PC-9 (cell line): ENCODE measurements at regions of chr11 and their contacts with region 1.

Region 1: DNA sequence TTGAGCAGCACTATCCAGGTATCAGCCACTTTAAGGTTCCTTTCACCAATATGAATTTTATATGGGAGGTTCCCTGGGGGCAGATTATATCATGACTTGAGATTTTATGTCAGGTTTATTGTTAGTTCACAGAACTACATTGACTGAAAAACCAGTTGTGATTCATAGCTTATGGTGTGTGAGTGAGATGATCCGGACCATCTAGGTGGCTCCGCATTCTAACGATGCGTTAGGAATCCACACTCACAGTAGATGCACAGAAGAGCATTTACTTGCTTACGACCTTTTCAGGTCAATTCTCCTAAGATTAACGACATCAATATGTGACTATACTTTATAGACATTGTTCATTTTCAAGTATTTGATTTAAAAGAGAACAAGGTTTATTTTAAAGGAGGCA is 984.3 kb upstream of the CCDC90B start:
- DNase-seq: no peak
- H3K4me3 ChIP-seq: no peak overlapping the region
- H3K27ac ChIP-seq: no peak overlapping the region
- H3K4me1 ChIP-seq: no peaks in the 10 kb centered on the region
- H3K27me3 ChIP-seq: peaks cover 6% of the 10 kb centered on the region; the same call in 1 of the 2 replicates
- CTCF ChIP-seq: no peak

Region 2: GRCh38 chr11:83895516-83895915 is 374.9 kb before region 1 on chr11:
- CTCF ChIA-PET with region 1: no interaction called
- POLR2A ChIA-PET with region 1: no interaction called
- intact Hi-C with region 1: no loop called
- DNase-seq: no peak
- H3K4me3 ChIP-seq: no peak overlapping the region
- H3K27ac ChIP-seq: no peak overlapping the region
- H3K4me1 ChIP-seq: no peaks in the 10 kb centered on the region
- H3K27me3 ChIP-seq: no peaks in the 10 kb centered on the region
- CTCF ChIP-seq: no peak

Region 3: DNA sequence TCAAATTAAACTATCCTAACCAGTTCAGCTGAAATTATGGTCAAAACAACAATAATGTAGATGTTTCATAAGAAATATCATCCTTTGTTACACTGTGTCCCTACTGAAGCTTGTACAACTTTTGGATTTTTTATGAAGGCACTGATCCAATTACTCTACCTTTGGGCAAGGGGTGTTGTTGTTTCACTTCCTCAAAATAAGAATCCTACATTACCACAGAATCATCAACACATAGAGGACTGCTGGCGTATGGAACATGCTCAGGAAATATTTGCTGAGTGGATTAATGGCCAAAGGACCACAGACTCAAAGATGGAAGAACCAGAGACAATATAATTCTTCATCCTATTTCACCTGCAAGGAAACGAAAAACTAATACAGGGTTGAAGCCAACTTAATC is 76.8 kb before region 1 on chr11:
- CTCF ChIA-PET with region 1: no interaction called
- POLR2A ChIA-PET with region 1: no interaction called
- intact Hi-C with region 1: no loop called
- DNase-seq: no peak
- H3K4me3 ChIP-seq: no peak overlapping the region
- H3K27ac ChIP-seq: no peak overlapping the region
- H3K4me1 ChIP-seq: no peaks in the 10 kb centered on the region
- H3K27me3 ChIP-seq: peaks cover 5% of the 10 kb centered on the region; the same call in 1 of the 2 replicates
- CTCF ChIP-seq: no peak

Region 4: GRCh38 chr11:84536456-84536855 is 266.0 kb after region 1 on chr11:
- CTCF ChIA-PET with region 1: interaction called, 11 read pairs
- POLR2A ChIA-PET with region 1: no interaction called
- intact Hi-C with region 1: no loop called
- DNase-seq: no peak
- H3K4me3 ChIP-seq: no peak overlapping the region
- H3K27ac ChIP-seq: no peak overlapping the region
- H3K4me1 ChIP-seq: no peaks in the 10 kb centered on the region
- H3K27me3 ChIP-seq: no peaks in the 10 kb centered on the region
- CTCF ChIP-seq: no peak